Esophagus squamous epithelium (tissue), 5 donors: ENCODE measurements at regions of chr1 and their contacts with region 1.

Region 1: GRCh38 chr1:3428899-3429298 is 25.6 kb upstream of the ARHGEF16 start:
- DNase-seq: no peak
- H3K4me3 ChIP-seq: no peak overlapping the region
- H3K27ac ChIP-seq: no peak overlapping the region
- H3K4me1 ChIP-seq: peaks cover 0 to 6% (median 0%) of the 10 kb centered on the region in 3 donors
- H3K27me3 ChIP-seq: peaks cover 0 to 95% (median 0%) of the 10 kb centered on the region in 4 donors
- CTCF ChIP-seq: no peak
- POLR2A ChIP-seq: no peak

Region 2: DNA sequence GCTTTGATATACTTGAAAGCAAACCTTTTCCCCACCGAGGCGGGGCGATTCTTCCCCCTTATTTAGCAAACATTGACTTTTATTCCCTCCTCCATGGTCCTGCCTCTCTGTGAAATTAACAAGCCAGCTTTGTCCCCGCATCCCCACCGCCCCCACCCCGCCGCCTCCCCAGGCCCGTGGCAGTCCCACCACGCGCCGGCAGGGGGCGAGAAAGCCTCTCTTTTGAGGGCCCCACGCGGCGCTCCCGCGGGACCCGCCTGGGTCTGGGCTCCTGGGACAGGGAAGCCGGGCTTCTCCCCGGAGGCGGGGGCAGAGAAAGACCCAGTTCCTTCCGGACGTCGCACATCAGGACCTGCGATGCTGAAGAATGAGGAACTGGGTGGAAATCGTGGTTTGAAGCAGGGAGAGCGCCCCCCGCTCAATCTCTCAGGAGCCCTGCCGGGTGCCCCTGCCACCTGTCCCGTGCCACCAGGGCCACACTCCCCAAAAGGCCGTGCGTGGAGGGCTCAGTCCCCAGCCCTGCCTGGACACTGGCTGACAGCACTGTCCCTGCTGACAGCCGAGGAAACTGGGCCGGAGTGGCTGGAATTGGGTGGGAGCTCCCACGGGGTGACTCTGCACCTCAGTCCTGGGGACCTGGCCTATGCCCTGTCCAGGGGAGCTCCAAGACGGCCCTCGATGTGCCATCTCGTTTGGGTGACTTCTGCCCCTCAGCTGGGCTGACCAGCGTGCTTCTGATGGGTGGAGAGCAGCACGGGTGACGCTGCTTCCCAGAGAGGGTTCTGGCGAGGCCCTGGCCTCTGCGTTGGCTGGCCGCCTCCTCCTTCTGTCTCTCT is 416.2 kb before region 1 on chr1:
- intact Hi-C with region 1: loop called (anchors 5 kb)
- DNase-seq: no peak
- H3K4me3 ChIP-seq: no peak overlapping the region
- H3K27ac ChIP-seq: no peak overlapping the region
- H3K4me1 ChIP-seq: peaks cover 0 to 13% (median 0%) of the 10 kb centered on the region in 3 donors
- H3K27me3 ChIP-seq: peaks cover 0 to 96% (median 0%) of the 10 kb centered on the region in 4 donors
- CTCF ChIP-seq: peak in 5 of 6 experiments; percentile 35 to 90 (median 49)
- POLR2A ChIP-seq: no peak

Region 3: GRCh38 chr1:3577300-3577699 is 148.4 kb after region 1 on chr1:
- intact Hi-C with region 1: no loop called
- DNase-seq: no peak
- H3K4me3 ChIP-seq: no peak overlapping the region
- H3K27ac ChIP-seq: no peak overlapping the region
- H3K4me1 ChIP-seq: peaks cover 0 to 16% (median 0%) of the 10 kb centered on the region in 3 donors
- H3K27me3 ChIP-seq: peaks cover 0 to 36% (median 0%) of the 10 kb centered on the region in 4 donors
- CTCF ChIP-seq: no peak
- POLR2A ChIP-seq: no peak

Region 4: DNA sequence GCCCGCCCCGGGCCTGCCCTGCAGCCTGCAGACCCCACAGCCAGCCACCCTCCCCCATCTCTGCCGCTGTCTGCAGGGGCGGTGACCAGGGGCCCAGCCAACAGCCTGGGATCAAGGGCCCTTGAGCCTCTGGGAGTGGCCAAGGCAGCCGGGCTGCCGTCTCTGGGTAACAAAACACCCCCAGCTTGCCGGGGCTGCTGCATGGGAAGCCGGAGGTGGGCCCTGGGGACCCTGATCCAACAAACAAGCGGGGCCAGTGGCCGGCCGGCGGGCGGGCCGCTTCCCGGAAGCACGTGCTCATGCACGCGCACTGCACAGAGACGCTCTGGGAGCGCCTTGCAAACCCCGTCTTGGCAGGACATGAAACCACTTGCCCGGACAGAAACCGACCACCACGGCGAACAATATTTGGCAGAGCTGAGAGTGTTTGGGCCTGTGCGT is 169.2 kb after region 1 on chr1:
- intact Hi-C with region 1: no loop called
- DNase-seq: no peak
- H3K4me3 ChIP-seq: peak overlapping the region in 1 of 4 donors; percentile 41
- H3K27ac ChIP-seq: no peak overlapping the region
- H3K4me1 ChIP-seq: peaks cover 17 to 26% (median 21%) of the 10 kb centered on the region in 3 donors
- H3K27me3 ChIP-seq: peaks cover 0 to 16% (median 0%) of the 10 kb centered on the region in 4 donors
- CTCF ChIP-seq: no peak
- POLR2A ChIP-seq: no peak